ENCODE measurements at regions of chr12 and their contacts with region 1.

Region 1: DNA sequence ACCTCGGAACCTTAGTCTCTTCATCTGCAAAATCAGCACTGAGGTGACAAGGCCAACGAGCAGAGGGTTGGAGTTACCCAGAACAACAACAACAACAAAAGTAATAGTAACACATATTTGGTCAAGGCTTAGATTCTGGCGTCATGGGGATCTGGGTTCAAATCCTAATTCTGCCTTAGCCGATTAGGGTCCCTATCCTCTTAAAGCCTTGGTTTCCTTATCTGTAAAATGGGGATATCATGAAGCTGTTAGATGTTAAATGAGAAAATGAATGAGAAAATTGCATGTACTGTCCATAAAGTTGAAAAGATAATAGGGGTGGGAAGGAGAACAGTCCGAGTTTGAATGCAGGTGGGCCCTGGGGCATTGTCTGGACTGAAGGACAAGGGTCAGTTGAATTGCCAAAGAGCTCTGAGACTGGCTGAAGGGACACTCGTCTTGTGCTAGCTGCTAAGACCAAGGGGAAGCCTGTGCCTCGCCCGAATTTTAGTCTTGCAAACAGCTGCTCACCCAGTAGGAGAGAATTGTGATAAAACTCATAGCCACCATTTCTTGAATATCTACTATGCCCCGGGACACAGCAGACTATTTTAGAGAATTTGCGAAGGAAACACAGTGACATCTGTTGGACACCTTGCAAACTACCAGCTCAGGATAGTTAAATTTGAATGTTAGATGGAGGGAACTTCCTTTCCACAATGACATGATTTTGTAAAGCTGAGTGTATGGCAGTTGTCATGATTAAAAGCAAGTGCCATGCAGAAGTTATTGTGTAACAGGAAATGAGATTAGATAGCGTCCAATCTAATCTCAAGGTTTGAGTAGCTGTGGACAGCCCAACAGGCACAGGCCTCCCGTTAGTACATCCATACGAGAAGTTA is 6.8 kb upstream of the HNF1A start:
- DNase-seq: peak; percentile 57
- ATAC-seq: peak; percentile 95
- H3K4me3 ChIP-seq: no peak overlapping the region
- H3K27ac ChIP-seq: no peak overlapping the region
- H3K4me1 ChIP-seq: no peaks in the 10 kb centered on the region
- H3K27me3 ChIP-seq: no peaks in the 10 kb centered on the region
- CTCF ChIP-seq: peak; percentile 72 to 83 (median 79)
- EP300 ChIP-seq: no peak
- POLR2A ChIP-seq: no peak
- RAD21 ChIP-seq: peak; percentile 95

Region 2: GRCh38 chr12:120649442-120650232 is 321.9 kb before region 1 on chr12:
- CTCF ChIA-PET with region 1: interaction called, 73 read pairs
- POLR2A ChIA-PET with region 1: interaction called, 7 read pairs
- RAD21 ChIA-PET with region 1: interaction called, 53 read pairs
- SMC1A ChIA-PET with region 1: interaction called, 67 read pairs
- in situ Hi-C with region 1: loop called (anchors 5 kb)
- intact Hi-C with region 1: loop called (anchors 1 kb)
- DNase-seq: no peak
- ATAC-seq: peak; percentile 13
- H3K4me3 ChIP-seq: peak overlapping the region; percentile 61; the same call in 1 of the 2 replicates
- H3K27ac ChIP-seq: no peak overlapping the region
- H3K4me1 ChIP-seq: peaks cover 19% of the 10 kb centered on the region
- H3K27me3 ChIP-seq: no peaks in the 10 kb centered on the region
- CTCF ChIP-seq: no peak
- EP300 ChIP-seq: no peak
- POLR2A ChIP-seq: no peak
- RAD21 ChIP-seq: no peak

Region 3: GRCh38 chr12:120750806-120751205 is 220.7 kb before region 1 on chr12:
- CTCF ChIA-PET with region 1: interaction called, 15 read pairs
- POLR2A ChIA-PET with region 1: no interaction called
- RAD21 ChIA-PET with region 1: interaction called, 10 read pairs
- SMC1A ChIA-PET with region 1: interaction called, 6 read pairs
- in situ Hi-C with region 1: no loop called
- intact Hi-C with region 1: no loop called
- DNase-seq: no peak
- ATAC-seq: no peak
- H3K4me3 ChIP-seq: no peak overlapping the region
- H3K27ac ChIP-seq: no peak overlapping the region
- H3K4me1 ChIP-seq: no peaks in the 10 kb centered on the region
- H3K27me3 ChIP-seq: no peaks in the 10 kb centered on the region
- CTCF ChIP-seq: no peak
- EP300 ChIP-seq: no peak
- POLR2A ChIP-seq: no peak
- RAD21 ChIP-seq: no peak

Region 4: DNA sequence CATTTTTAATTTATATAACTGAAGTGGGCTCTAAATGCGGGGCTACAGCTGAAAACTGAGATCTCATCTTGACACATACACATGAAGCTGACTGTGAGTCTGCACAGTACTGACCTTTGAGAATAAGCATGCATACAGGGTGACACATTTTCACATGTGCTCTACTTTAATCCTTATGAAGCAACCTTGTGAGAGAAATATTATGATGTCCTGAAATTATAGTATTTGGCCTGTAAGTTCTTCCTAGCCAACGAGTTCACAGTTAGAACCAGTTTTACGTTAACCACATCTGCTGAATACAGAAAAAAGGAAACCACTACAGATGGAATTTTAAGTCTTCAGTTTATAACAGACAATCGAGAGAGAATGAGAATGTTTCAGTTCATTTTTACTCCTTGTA is 137.7 kb before region 1 on chr12:
- CTCF ChIA-PET with region 1: interaction called, 5 read pairs
- POLR2A ChIA-PET with region 1: no interaction called
- RAD21 ChIA-PET with region 1: interaction called, 12 read pairs
- SMC1A ChIA-PET with region 1: interaction called, 5 read pairs
- in situ Hi-C with region 1: no loop called
- intact Hi-C with region 1: no loop called
- DNase-seq: no peak
- ATAC-seq: peak; percentile 67
- H3K4me3 ChIP-seq: peak overlapping the region; percentile 66
- H3K27ac ChIP-seq: peak overlapping the region; percentile 96
- H3K4me1 ChIP-seq: peaks cover 64% of the 10 kb centered on the region
- H3K27me3 ChIP-seq: no peaks in the 10 kb centered on the region
- CTCF ChIP-seq: no peak
- EP300 ChIP-seq: no peak
- POLR2A ChIP-seq: no peak
- RAD21 ChIP-seq: no peak

Region 5: GRCh38 chr12:120904197-120904773 is 67.3 kb before region 1 on chr12 and contains the start of gene SPPL3:
- CTCF ChIA-PET with region 1: interaction called, 12 read pairs
- POLR2A ChIA-PET with region 1: no interaction called
- RAD21 ChIA-PET with region 1: interaction called, 14 read pairs
- SMC1A ChIA-PET with region 1: interaction called, 19 read pairs
- in situ Hi-C with region 1: no loop called
- intact Hi-C with region 1: no loop called
- DNase-seq: peak; percentile 43
- ATAC-seq: peak; percentile 81
- H3K4me3 ChIP-seq: peak within 1 kb of the TSS; percentile 91
- H3K27ac ChIP-seq: peak within 1 kb of the TSS; percentile 79
- H3K4me1 ChIP-seq: 0 out of 2 replicates have a peak, but pooled peaks cover 3% of the 10 kb centered on the region
- H3K27me3 ChIP-seq: no peaks in the 10 kb centered on the region
- CTCF ChIP-seq: peak in 1 of 3 experiments; percentile 33; a peak in 2 of 6 replicates
- EP300 ChIP-seq: no peak
- POLR2A ChIP-seq: peak; percentile 71
- RAD21 ChIP-seq: no peak
- polyA plus RNA-seq, gene SPPL3: 5.7 to 8.3 TPM

Region 6: GRCh38 chr12:120955232-120955631 is 16.3 kb before region 1 on chr12:
- CTCF ChIA-PET with region 1: interaction called, 52 read pairs
- POLR2A ChIA-PET with region 1: no interaction called
- RAD21 ChIA-PET with region 1: interaction called, 14 read pairs
- SMC1A ChIA-PET with region 1: interaction called, 16 read pairs
- in situ Hi-C with region 1: no loop called
- intact Hi-C with region 1: no loop called
- DNase-seq: no peak
- ATAC-seq: no peak
- H3K4me3 ChIP-seq: no peak overlapping the region
- H3K27ac ChIP-seq: no peak overlapping the region
- H3K4me1 ChIP-seq: peaks cover 10% of the 10 kb centered on the region; the same call in 1 of the 2 replicates
- H3K27me3 ChIP-seq: no peaks in the 10 kb centered on the region
- CTCF ChIP-seq: no peak
- EP300 ChIP-seq: no peak
- POLR2A ChIP-seq: no peak
- RAD21 ChIP-seq: no peak

Region 7: GRCh38 chr12:120999191-121000085 is 27.9 kb after region 1 on chr12:
- CTCF ChIA-PET with region 1: no interaction called
- POLR2A ChIA-PET with region 1: no interaction called
- RAD21 ChIA-PET with region 1: no interaction called
- SMC1A ChIA-PET with region 1: no interaction called
- in situ Hi-C with region 1: no loop called
- intact Hi-C with region 1: no loop called
- DNase-seq: no peak
- ATAC-seq: peak; percentile 40
- H3K4me3 ChIP-seq: no peak overlapping the region
- H3K27ac ChIP-seq: no peak overlapping the region
- H3K4me1 ChIP-seq: no peaks in the 10 kb centered on the region
- H3K27me3 ChIP-seq: no peaks in the 10 kb centered on the region
- CTCF ChIP-seq: no peak
- EP300 ChIP-seq: no peak
- POLR2A ChIP-seq: peak; percentile 49; the same call in 1 of the 2 replicates
- RAD21 ChIP-seq: no peak

Region 8: GRCh38 chr12:121023809-121024208 is 52.3 kb after region 1 on chr12:
- CTCF ChIA-PET with region 1: no interaction called
- POLR2A ChIA-PET with region 1: no interaction called
- RAD21 ChIA-PET with region 1: no interaction called
- SMC1A ChIA-PET with region 1: no interaction called
- in situ Hi-C with region 1: no loop called
- intact Hi-C with region 1: no loop called
- DNase-seq: no peak
- ATAC-seq: no peak
- H3K4me3 ChIP-seq: no peak overlapping the region
- H3K27ac ChIP-seq: no peak overlapping the region
- H3K4me1 ChIP-seq: no peaks in the 10 kb centered on the region
- H3K27me3 ChIP-seq: no peaks in the 10 kb centered on the region
- CTCF ChIP-seq: no peak
- EP300 ChIP-seq: no peak
- POLR2A ChIP-seq: no peak
- RAD21 ChIP-seq: no peak

Region 9: DNA sequence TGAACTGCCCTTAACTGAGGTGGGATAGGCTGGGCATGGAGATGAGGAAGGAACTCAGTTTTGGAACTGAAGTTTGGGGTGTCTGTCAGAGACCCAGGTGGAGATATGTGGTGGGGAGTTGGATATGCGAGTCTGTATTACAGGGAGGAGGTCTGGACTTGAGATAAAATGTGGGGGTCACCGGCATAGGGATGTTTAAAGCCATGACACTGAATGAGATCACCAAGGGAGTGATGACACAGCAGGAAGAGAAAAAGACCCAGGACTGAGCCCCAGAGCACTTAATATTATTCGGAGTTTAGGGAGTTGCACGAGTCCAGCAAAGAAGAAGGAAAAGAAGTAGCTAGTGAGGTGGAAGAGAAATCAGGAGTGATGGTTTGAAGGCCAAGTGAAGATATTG is 71.5 kb after region 1 on chr12:
- CTCF ChIA-PET with region 1: no interaction called
- POLR2A ChIA-PET with region 1: no interaction called
- RAD21 ChIA-PET with region 1: no interaction called
- SMC1A ChIA-PET with region 1: no interaction called
- in situ Hi-C with region 1: no loop called
- intact Hi-C with region 1: no loop called
- DNase-seq: no peak
- ATAC-seq: no peak
- H3K4me3 ChIP-seq: no peak overlapping the region
- H3K27ac ChIP-seq: no peak overlapping the region
- H3K4me1 ChIP-seq: peaks cover 6% of the 10 kb centered on the region
- H3K27me3 ChIP-seq: no peaks in the 10 kb centered on the region
- CTCF ChIP-seq: no peak
- EP300 ChIP-seq: no peak
- POLR2A ChIP-seq: no peak
- RAD21 ChIP-seq: no peak

Region 10: DNA sequence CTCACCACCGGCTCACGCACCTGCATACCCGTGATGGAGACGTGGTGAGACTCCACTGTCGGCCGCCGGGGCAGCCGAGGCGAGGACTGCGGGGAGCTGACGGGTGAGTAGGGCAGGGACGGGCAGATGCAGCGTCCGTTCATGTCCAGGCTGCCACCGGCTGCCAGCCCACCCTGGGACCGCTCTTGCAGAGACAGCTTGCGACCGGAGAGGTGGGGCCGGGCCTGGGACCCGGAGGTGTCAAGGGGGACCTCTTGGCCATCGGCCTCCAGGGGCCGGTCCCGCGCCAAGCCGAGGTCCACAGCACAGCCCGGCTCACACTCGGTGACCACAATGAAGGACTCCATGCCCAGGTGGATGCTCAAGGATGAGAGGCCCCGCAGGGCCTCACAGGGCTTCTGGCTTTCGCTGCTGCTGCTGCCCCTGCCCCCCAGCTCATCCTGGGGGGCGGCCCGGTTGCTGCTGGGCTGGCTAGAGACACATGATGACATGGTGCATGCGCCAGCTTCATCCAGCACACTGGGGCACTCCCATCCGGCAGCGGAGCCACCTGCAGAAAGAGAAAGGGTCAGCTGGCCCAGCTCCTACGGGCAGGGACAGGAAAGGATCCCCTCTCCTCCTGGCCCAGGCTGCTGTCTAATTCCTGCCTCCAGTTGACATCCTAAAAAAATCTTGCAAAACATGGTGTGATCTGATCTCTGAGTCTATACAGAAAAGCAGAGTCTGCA is 302.7 kb after region 1 on chr12:
- CTCF ChIA-PET with region 1: no interaction called
- POLR2A ChIA-PET with region 1: no interaction called
- RAD21 ChIA-PET with region 1: no interaction called
- SMC1A ChIA-PET with region 1: no interaction called
- in situ Hi-C with region 1: no loop called
- intact Hi-C with region 1: no loop called
- DNase-seq: no peak
- ATAC-seq: no peak
- H3K4me3 ChIP-seq: no peak overlapping the region
- H3K27ac ChIP-seq: no peak overlapping the region
- H3K4me1 ChIP-seq: peaks cover 4% of the 10 kb centered on the region
- H3K27me3 ChIP-seq: no peaks in the 10 kb centered on the region
- CTCF ChIP-seq: no peak
- EP300 ChIP-seq: no peak
- POLR2A ChIP-seq: 0 out of 2 replicates have a peak, but pooled peaks have one; percentile 26
- RAD21 ChIP-seq: no peak

Measured in GM12878 (cell line).